Tibial artery (tissue), 4 donors: ENCODE measurements at regions of chrX and their contacts with region 1.

Region 1: GRCh38 chrX:147788641-147789350 is 122.9 kb upstream of the FMR1 start:
- DNase-seq: no peak
- H3K4me3 ChIP-seq: no peak overlapping the region
- H3K27ac ChIP-seq: no peak overlapping the region
- H3K4me1 ChIP-seq: no peaks in the 10 kb centered on the region
- H3K27me3 ChIP-seq: no peaks in the 10 kb centered on the region
- CTCF ChIP-seq: no peak

Region 2: DNA sequence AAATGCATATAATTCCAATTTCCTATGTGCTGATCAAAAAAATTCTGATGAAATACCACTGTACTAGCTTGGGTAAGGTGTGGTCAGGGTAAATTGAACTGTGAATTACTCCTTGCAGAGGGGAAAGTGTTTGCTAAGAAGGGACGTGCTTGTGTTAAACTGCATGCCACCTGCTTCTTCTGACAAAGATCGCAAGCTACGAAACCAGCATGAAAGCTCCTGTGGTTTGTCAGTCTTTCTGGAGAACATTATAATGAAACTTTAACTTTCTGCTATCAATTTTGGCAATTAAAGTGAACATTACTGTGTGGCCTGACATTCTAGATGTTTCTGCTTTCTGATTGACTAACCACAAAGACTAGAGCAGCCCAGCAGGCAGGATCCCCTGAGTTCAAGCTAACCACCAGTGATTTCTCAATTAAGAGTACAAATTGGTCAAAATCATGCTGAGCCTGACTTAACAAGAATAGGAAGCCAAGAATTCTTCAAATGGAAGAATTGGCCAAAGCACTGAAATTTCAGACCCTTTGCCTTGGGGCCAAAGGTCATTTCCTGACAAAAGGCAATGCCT is 1732.2 kb before region 1 on chrX:
- intact Hi-C with region 1: loop called (anchors 5 kb)
- DNase-seq: no peak
- H3K4me3 ChIP-seq: no peak overlapping the region
- H3K27ac ChIP-seq: no peak overlapping the region
- H3K4me1 ChIP-seq: no peaks in the 10 kb centered on the region
- H3K27me3 ChIP-seq: no peaks in the 10 kb centered on the region
- CTCF ChIP-seq: no peak

Region 3: GRCh38 chrX:147763131-147763530 is 25.7 kb before region 1 on chrX:
- intact Hi-C with region 1: no loop called
- DNase-seq: no peak
- H3K4me3 ChIP-seq: no peak overlapping the region
- H3K27ac ChIP-seq: no peak overlapping the region
- H3K4me1 ChIP-seq: no peaks in the 10 kb centered on the region
- H3K27me3 ChIP-seq: no peaks in the 10 kb centered on the region
- CTCF ChIP-seq: no peak